ENCODE measurements at regions of chr7 and their contacts with region 1.

Region 1: DNA sequence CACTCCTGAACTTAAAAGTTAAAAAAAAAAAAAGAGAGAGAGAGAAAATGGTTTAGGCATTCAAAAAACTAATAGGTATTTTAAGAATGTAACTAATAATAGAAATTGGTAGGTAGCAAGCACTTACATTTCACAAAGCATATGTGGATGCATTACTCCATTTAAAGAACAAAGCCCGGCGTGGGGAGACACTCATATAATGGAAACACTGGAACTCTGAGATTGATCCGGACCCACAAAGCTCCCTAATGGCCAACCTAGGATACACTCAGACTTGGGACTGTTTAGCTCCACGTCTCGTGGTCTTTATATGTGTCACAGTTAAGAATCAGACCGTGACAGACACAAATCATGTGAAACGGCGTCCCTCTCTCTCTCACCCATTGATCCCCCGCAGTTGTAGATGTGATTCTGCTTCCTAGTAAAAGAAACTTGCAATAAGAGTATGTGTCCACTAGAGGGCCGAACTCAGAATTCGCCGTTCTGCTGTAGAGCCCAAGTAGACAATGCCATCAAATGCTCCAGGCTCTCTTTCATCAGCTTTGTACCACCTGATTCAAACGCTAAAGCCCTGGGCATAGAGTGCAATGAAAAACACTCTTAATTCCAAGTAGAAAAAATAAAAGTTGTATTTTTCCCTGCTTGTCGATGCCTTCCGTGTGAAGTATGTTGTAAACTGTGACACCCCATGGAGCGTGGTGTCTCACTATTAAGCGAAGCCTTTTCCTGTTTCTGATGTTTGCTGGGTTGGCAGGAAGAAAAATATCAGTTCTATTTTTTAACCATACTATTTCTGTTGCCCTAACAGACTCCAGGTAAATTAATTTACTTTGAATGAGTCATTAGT is 429.0 kb upstream of the MTPN start:
- DNase-seq: peak; percentile 58
- H3K4me3 ChIP-seq: no peak overlapping the region
- H3K27ac ChIP-seq: no peak overlapping the region
- H3K4me1 ChIP-seq: no peaks in the 10 kb centered on the region
- H3K27me3 ChIP-seq: 0 out of 2 replicates have a peak, but pooled peaks cover 4% of the 10 kb centered on the region

Region 2: DNA sequence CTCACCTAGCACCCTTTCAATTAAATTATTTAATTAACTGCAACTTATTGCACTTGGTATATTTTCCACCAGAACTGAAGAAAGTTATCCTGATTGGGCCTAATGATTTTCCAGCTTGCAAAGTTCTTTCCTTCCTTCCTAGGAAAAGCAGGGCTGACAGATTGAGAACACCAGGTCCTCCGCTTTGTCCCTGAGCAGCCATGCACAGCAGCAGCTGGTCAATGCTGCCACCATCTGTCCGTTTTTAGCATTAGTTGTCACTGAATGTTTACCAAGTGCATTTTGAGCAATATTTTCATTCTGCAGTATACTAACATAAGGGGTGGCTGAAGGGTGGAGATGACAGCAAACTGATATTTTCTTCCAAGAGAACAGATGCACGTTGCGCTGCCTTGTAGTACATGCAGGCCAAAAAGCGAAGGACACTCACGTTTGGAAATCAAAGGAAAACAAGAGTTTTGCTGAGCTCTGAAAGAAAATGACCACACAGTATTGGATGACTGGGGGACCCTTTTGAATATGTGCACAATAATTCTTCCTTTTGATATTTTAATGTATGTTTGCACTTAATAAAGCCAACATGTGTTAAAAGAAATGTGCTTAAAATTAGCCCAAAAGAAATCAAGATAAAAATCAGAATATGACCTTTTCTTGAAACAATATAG is 1186.2 kb after region 1 on chr7:
- in situ Hi-C with region 1: loop called (anchors 25 kb)
- DNase-seq: peak; percentile 83
- H3K4me3 ChIP-seq: no peak overlapping the region
- H3K27ac ChIP-seq: peak overlapping the region; percentile 60
- H3K4me1 ChIP-seq: peaks cover 15% of the 10 kb centered on the region
- H3K27me3 ChIP-seq: no peaks in the 10 kb centered on the region

Measured in GM23248 (cell line).